ENCODE measurements at regions of chr7 and their contacts with region 1.

Region 1: DNA sequence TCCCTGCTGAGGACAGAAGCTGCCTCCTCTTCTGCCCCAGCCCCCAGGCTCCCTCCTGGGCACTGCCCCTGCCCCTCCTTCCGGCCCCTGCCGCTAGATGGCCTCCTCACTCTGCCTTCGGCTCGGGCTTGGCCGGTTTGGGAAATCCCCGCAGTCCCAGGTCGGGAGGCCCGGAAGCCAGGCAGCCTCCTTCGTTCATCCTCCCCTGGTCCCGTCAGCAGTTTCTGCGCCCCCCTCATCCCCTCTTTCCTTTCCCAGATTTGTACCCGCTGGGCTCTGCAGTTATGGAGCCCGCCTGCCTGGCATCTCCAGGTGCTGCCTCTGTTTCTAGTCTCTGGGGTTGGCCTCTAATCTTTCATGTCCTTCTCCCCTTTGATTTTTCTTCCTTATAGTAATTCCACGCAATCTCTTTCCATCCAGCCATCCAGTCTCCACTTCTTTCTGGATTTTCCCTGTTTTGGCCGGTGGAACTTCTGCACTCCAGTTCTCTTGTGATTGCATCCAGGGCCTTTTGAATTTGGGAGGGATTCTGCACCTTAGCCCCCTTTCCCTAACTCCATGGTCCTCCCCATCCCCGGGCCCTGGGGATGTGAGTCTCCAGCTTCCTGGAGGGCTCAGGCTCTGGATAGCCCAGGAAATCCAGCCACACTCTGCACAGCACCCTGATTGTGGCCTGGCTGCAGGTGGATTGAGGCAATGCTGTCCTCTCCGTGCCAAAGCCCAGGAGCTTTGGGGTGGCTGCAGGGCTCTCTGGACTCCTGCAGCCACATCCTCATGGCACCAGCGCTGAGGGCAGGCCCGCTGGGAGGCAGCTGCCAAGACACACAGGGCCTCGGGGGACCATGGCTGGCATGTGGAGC is 3.3 kb upstream of the SHH start:
- DNase-seq: no peak
- ATAC-seq: peak; percentile 80
- H3K4me3 ChIP-seq: no peak overlapping the region
- H3K27ac ChIP-seq: peak overlapping the region; percentile 65
- H3K4me1 ChIP-seq: peaks cover 45% of the 10 kb centered on the region
- H3K27me3 ChIP-seq: peaks cover 2% of the 10 kb centered on the region; the same call in 1 of the 2 replicates
- CTCF ChIP-seq: peak; percentile 93

Region 2: DNA sequence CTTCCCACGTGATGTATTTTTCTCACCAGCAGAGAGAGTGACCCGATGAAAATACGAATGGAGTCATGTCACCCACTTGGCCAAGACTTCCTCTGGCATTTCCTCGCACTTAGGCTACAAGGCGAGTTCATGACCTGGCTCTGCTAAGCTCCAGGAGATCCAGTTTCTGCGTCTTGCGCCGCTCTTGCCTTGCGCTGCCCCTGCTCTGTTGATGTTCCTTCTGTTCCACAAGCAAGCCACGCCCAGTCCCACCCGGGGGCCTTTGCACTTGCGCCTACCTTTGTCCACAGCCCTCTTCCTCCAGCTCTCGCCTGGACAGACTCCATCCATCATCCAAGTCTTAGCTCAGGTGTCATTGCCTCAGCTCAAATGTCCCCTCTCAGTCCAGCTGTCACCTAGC is 113.0 kb after region 1 on chr7:
- CTCF ChIA-PET with region 1: no interaction called
- POLR2A ChIA-PET with region 1: no interaction called
- in situ Hi-C with region 1: no loop called
- intact Hi-C with region 1: no loop called
- DNase-seq: no peak
- ATAC-seq: no peak
- H3K4me3 ChIP-seq: no peak overlapping the region
- H3K27ac ChIP-seq: no peak overlapping the region
- H3K4me1 ChIP-seq: no peaks in the 10 kb centered on the region
- H3K27me3 ChIP-seq: no peaks in the 10 kb centered on the region
- CTCF ChIP-seq: no peak

Region 3: GRCh38 chr7:156139633-156140032 is 324.1 kb after region 1 on chr7:
- CTCF ChIA-PET with region 1: no interaction called
- POLR2A ChIA-PET with region 1: no interaction called
- in situ Hi-C with region 1: no loop called
- intact Hi-C with region 1: loop called (anchors 10 kb)
- DNase-seq: no peak
- ATAC-seq: no peak
- H3K4me3 ChIP-seq: no peak overlapping the region
- H3K27ac ChIP-seq: no peak overlapping the region
- H3K4me1 ChIP-seq: no peaks in the 10 kb centered on the region
- H3K27me3 ChIP-seq: no peaks in the 10 kb centered on the region
- CTCF ChIP-seq: no peak

Region 4: DNA sequence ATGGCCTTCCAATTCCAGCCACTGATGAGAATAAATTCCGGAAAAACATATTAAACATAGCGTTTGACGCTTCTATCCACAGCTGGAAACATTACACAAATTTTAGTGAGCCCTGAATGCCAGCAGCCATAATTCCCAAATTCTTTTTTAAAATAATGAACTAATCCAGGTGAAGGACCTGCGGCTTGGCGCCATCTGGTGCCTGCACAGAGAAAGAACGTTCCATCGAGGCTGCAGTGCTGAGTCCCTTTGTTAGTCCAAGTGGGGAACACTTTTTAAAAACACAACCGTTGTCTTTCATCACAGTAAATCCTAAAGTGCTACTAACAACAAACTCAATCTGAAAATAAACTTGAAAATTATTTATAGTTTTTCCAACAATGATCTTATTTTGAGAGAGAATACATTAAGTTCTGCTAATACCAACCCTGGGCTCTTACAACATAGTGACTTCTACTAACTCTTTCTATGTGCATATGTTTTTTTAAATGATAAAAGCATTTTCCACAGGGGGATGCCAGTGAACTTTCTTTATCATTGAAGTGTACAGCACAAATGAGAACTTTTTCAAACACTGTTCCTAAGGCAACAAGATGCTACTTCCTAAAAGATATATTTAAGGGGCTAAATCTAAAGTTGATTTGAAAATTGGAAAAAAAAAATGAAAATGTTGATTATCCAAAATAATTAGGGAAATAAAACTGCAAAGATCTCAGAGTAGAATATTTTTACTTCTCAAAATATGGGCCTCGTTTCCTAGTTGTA is 658.1 kb after region 1 on chr7:
- CTCF ChIA-PET with region 1: interaction called, 3 read pairs
- POLR2A ChIA-PET with region 1: no interaction called
- in situ Hi-C with region 1: no loop called
- intact Hi-C with region 1: loop called (anchors 5 kb)
- DNase-seq: peak; percentile 46
- ATAC-seq: peak; percentile 82
- H3K4me3 ChIP-seq: no peak overlapping the region
- H3K27ac ChIP-seq: no peak overlapping the region
- H3K4me1 ChIP-seq: no peaks in the 10 kb centered on the region; the same call in 1 of the 2 replicates
- H3K27me3 ChIP-seq: no peaks in the 10 kb centered on the region
- CTCF ChIP-seq: peak; percentile 91

Measured in Panc1 (cell line).